ENCODE measurements at regions of chr11 and their contacts with region 1.

Region 1: GRCh38 chr11:30917859-30918478 is 331.8 kb upstream of the MPPED2 start:
- DNase-seq: no peak

Region 2: GRCh38 chr11:30346068-30346688 is 571.8 kb before region 1 on chr11:
- intact Hi-C with region 1: loop called in 1 of 2 experiments (anchors 10 kb)
- DNase-seq: no peak

Measured in posterior vena cava (tissue), 2 donors.